Motor neuron (in vitro differentiated cells): ENCODE measurements at regions of chr18 and their contacts with region 1.

Region 1: GRCh38 chr18:23752796-23753195 is 63.5 kb downstream of the LAMA3 start:
- ATAC-seq: peak in 1 of 8 experiments; percentile 72
- H3K4me3 ChIP-seq: no peak overlapping the region
- H3K27ac ChIP-seq: no peak overlapping the region
- H3K4me1 ChIP-seq: no peaks in the 10 kb centered on the region

Region 2: DNA sequence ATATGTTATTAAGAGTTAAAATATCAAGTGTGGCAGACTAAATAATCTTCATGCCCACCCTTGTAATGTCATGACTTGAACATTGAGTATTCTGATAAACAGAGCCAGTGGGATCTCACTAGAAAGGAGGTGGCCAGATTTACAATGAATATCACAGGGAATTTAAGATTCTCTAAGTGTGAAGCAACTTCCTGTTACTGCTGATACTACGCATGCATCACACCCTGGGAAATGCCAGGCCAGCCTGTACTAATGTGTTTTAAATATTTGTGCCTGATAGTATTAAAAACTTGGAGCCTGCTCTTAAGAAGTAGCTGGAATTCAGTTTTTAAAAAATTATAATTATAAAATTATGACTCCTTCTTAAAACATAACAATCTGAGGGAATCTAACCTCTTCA is 84.8 kb after region 1 on chr18:
- in situ Hi-C with region 1: no loop called
- ATAC-seq: peak in 2 of 8 experiments; percentile 97 to 99
- H3K4me3 ChIP-seq: no peak overlapping the region
- H3K27ac ChIP-seq: no peak overlapping the region
- H3K4me1 ChIP-seq: no peaks in the 10 kb centered on the region

Region 3: GRCh38 chr18:23871410-23871809 is 118.6 kb after region 1 on chr18:
- in situ Hi-C with region 1: loop called in 1 of 9 experiments (anchors 25 kb)
- ATAC-seq: peak in 7 of 8 experiments; percentile 19 to 84 (median 44)
- H3K4me3 ChIP-seq: no peak overlapping the region
- H3K27ac ChIP-seq: no peak overlapping the region
- H3K4me1 ChIP-seq: peaks cover 2 to 9% of the 10 kb centered on the region in 2 donors